Thyroid gland (tissue), 4 donors: ENCODE measurements at regions of chr3 and their contacts with region 1.

Region 1: GRCh38 chr3:42957573-42957972 is 21.5 kb upstream of the GASK1A start:
- DNase-seq: no peak
- H3K4me3 ChIP-seq: no peak overlapping the region
- H3K27ac ChIP-seq: no peak overlapping the region
- H3K4me1 ChIP-seq: peaks cover 10% of the 10 kb centered on the region in 2 donors
- H3K27me3 ChIP-seq: no peaks in the 10 kb centered on the region
- CTCF ChIP-seq: no peak
- POLR2A ChIP-seq: no peak

Region 2: GRCh38 chr3:43013743-43014155 is 56.2 kb after region 1 on chr3:
- intact Hi-C with region 1: no loop called
- DNase-seq: no peak
- H3K4me3 ChIP-seq: no peak overlapping the region
- H3K27ac ChIP-seq: no peak overlapping the region
- H3K4me1 ChIP-seq: no peaks in the 10 kb centered on the region
- H3K27me3 ChIP-seq: no peaks in the 10 kb centered on the region
- CTCF ChIP-seq: no peak
- POLR2A ChIP-seq: no peak

Region 3: GRCh38 chr3:43155464-43156121 is 198.0 kb after region 1 on chr3:
- intact Hi-C with region 1: loop called (anchors 5 kb)
- DNase-seq: peak; percentile 57 to 68
- H3K4me3 ChIP-seq: no peak overlapping the region
- H3K27ac ChIP-seq: no peak overlapping the region
- H3K4me1 ChIP-seq: no peaks in the 10 kb centered on the region
- H3K27me3 ChIP-seq: no peaks in the 10 kb centered on the region
- CTCF ChIP-seq: peak; percentile 29 to 76 (median 48)
- POLR2A ChIP-seq: no peak

Region 4: DNA sequence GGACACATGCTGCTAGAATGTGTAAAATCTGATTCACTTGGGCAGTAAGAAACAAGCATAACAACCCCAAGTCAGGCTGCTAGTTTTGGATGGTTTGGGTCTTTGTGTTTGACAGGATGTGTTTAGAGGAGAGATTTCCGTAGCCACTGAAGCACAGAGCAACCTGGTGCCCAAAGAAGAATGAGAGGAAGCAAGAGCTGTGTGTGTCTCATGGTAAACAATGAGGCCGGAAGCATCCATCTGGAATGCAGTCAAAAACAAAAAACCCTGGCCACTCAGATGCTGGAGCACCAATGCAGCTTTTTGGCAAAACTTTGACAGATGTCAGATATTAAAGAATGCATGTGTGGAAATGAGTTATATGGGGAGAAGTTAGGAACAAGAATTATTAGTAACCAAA is 289.4 kb after region 1 on chr3:
- intact Hi-C with region 1: no loop called
- DNase-seq: no peak
- H3K4me3 ChIP-seq: no peak overlapping the region
- H3K27ac ChIP-seq: no peak overlapping the region
- H3K4me1 ChIP-seq: no peaks in the 10 kb centered on the region
- H3K27me3 ChIP-seq: no peaks in the 10 kb centered on the region
- CTCF ChIP-seq: no peak
- POLR2A ChIP-seq: no peak